Left cardiac atrium (tissue), 4 donors: ENCODE measurements at regions of chr15 and their contacts with region 1.

Region 1: DNA sequence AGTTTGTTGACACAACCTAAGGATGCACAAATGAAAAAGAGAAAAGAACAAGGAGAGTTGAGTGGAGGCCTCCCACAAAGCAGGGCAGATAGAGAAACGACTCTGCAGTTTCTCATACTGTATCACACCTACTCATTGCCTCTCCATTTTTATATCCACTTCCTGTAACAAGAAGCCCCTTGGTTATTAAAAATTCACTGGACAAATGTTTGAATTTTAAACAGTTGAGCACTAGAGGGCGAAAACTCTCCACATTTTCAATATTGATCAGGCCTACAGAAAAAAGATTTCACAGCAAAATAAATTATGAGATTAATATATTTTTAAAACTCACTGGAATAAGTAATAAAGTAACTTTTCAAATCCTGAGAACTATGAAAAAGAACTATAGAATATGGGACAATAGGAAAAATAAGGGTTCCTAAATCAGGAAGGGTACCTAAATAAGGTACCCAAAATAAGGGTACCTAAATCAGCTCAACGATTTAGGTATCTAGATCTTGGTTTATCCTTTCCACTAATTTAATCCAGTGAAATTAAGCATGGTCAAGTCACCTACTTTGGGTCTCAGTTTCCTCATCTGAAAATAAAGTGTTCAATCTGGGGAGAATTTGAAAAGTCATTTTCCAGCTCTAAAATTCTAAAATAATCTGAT is 47.0 kb upstream of the PPIB start:
- DNase-seq: no peak
- ATAC-seq: no peak

Region 2: GRCh38 chr15:64263567-64263966 is 53.8 kb after region 1 on chr15:
- intact Hi-C with region 1: no loop called
- DNase-seq: no peak
- ATAC-seq: no peak

Region 3: GRCh38 chr15:64284042-64284441 is 74.2 kb after region 1 on chr15:
- intact Hi-C with region 1: no loop called
- DNase-seq: no peak
- ATAC-seq: peak in 1 of 2 donors; percentile 77

Region 4: GRCh38 chr15:64333986-64334929 is 124.5 kb after region 1 on chr15:
- intact Hi-C with region 1: no loop called
- DNase-seq: no peak
- ATAC-seq: peak in 1 of 2 donors; percentile 63

Region 5: GRCh38 chr15:64355944-64356709 is 146.3 kb after region 1 on chr15 and contains the start of gene CSNK1G1:
- intact Hi-C with region 1: loop called (anchors 10 kb)
- DNase-seq: peak; percentile 97
- ATAC-seq: peak; percentile 99 to 100
- total RNA-seq, gene CSNK1G1: 8.6 to 9.7 TPM

Region 6: GRCh38 chr15:64387562-64388168 is 177.9 kb after region 1 on chr15 and contains the start of gene TRIP4:
- intact Hi-C with region 1: loop called in 1 of 2 experiments (anchors 10 kb)
- DNase-seq: peak; percentile 96
- ATAC-seq: peak; percentile 100
- total RNA-seq, gene TRIP4: 15.5 to 16.3 TPM